Esophagus muscularis mucosa (tissue), 4 donors: ENCODE measurements at regions of chr17 and their contacts with region 1.

Region 1: GRCh38 chr17:64424324-64425076 is 24.4 kb upstream of the MILR1 start:
- DNase-seq: no peak
- H3K4me3 ChIP-seq: no peak overlapping the region
- H3K27ac ChIP-seq: no peak overlapping the region
- H3K4me1 ChIP-seq: peaks cover 0 to 4% (median 2%) of the 10 kb centered on the region in 4 donors
- H3K27me3 ChIP-seq: no peaks in the 10 kb centered on the region
- CTCF ChIP-seq: no peak
- EP300 ChIP-seq: no peak
- POLR2A ChIP-seq: no peak

Region 2: GRCh38 chr17:64491034-64491859 is 66.7 kb after region 1 on chr17:
- intact Hi-C with region 1: loop called (anchors 5 kb)
- DNase-seq: no peak
- H3K4me3 ChIP-seq: no peak overlapping the region
- H3K27ac ChIP-seq: no peak overlapping the region
- H3K4me1 ChIP-seq: peaks cover 21 to 33% (median 25%) of the 10 kb centered on the region in 4 donors
- H3K27me3 ChIP-seq: no peaks in the 10 kb centered on the region
- CTCF ChIP-seq: peak; percentile 33 to 56 (median 53)
- EP300 ChIP-seq: no peak
- POLR2A ChIP-seq: no peak